ENCODE measurements at regions of chr5 and their contacts with region 1.

Region 1: DNA sequence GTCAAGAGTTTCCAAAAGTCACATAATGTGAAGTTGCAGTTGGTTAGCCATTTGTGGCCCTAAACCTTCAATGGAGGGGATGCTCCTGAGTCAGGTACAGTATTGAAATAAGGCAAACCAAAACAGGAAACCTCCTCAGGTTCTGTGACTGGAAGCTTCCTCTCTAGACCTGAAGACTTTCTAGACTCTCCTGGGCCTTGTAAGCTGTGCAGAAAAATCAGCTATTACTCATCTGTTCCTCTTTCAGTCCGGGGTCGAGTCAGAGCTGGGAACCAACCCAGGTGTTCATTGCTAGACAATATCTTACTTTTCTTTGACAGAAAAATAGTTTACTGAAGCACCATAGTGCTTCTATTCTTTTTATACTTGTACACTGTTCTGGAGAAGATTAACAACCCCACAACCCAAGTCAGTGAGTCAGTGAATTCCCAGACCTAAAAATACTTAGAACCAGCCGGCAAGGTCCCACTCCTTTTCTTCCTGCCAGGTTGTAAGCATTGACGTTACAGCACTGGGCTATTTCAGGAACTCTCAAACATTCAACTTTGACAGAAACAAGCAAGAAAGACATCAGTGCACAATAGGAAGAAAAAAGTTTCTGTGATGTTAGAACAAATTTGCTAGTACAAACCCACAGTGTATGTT is 47.3 kb downstream of the FSTL4 start:
- DNase-seq: no peak

Region 2: DNA sequence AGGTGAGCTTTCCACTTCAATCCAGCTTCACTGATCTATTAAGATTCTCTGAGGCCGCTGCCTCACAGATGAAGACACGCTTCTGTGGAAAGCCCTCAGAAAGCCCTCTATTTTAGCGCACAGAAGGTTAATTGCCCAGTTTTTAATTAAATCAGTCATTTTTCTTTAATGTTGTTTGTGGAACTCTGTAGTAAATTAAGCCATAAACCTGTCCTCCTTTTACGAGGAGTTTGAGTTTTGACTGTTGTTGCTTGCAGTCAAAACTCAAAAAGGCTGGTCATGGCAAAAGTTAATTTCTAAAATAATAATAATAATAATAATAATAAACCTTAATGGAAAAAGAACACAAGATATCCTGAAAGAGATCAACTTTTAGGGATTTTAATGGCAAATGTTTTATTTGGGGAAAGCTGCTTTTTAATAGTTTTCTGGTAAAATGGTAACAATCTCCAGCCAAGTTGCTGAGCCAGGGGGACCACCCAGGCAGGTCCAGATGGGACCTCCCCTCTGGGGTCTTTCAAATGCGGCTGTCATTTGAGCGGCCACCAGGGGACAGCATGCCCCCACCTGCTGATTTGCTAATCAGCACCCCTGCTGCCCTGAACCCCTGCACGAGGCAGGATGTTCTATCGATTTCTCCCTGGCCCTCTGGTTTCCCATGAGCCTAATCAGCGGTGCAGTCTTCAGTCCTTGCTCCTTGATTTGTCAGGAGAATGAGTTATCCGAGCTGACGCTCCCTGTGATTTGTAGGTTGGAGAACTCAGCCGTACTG is 199.9 kb before region 1 on chr5:
- intact Hi-C with region 1: loop called in 1 of 2 experiments (anchors 5 kb)
- DNase-seq: no peak

Region 3: DNA sequence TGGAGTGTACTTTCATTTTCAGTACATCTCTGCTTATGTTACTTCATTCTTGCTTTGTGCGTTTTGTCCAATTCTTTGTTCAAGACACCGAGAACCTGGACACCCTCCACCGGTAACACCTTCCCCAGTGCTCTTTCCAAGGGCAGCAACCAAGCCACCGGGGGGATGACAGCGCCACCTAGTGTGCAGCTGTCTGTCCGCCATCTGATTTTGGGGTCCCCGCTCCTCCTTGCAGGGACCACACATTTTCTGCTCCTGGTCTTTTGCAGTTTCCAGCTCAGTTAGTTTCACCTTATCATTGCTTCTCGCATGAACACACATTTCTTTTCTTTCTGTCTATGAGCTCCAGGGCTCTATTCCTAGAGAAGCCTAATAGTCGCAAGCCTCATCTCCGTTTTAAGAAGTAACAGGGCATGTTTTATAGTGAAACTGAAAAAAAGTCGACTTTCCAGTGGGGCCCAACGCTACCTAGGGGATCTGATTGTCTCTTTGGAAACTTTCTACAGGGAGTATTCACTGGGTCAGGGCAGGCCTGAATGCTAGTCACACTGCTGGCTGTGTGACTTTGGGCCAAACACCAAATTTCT is 104.8 kb before region 1 on chr5:
- intact Hi-C with region 1: no loop called
- DNase-seq: no peak

Region 4: GRCh38 chr5:133489632-133490031 is 75.4 kb before region 1 on chr5:
- intact Hi-C with region 1: no loop called
- DNase-seq: no peak

Measured in posterior vena cava (tissue), 2 donors.